ENCODE measurements at regions of chr5 and their contacts with region 1.

Region 1: GRCh38 chr5:93960044-93960443 is 218.6 kb upstream of the POU5F2 start:
- DNase-seq: no peak
- ATAC-seq: no peak
- H3K4me3 ChIP-seq: no peak overlapping the region
- H3K4me3 Mint-ChIP-seq: no peak overlapping the region
- H3K27ac ChIP-seq: no peak overlapping the region
- H3K27ac Mint-ChIP-seq: no peak overlapping the region
- H3K4me1 ChIP-seq: no peaks in the 10 kb centered on the region
- H3K4me1 Mint-ChIP-seq: peaks cover 0 to under 1% (median 0%) of the 10 kb centered on the region in 3 donors
- H3K27me3 ChIP-seq: no peaks in the 10 kb centered on the region
- H3K27me3 Mint-ChIP-seq: no peaks in the 10 kb centered on the region

Region 2: GRCh38 chr5:93995126-93995621 is 35.1 kb after region 1 on chr5:
- CTCF ChIA-PET with region 1: interaction called in 1 of 2 experiments, 10 read pairs
- POLR2A ChIA-PET with region 1: no interaction called
- DNase-seq: peak in 1 of 35 experiments; percentile 16
- ATAC-seq: peak in 2 of 4 experiments; percentile 43 to 46
- H3K4me3 ChIP-seq: no peak overlapping the region
- H3K4me3 Mint-ChIP-seq: no peak overlapping the region
- H3K27ac ChIP-seq: no peak overlapping the region
- H3K27ac Mint-ChIP-seq: no peak overlapping the region
- H3K4me1 ChIP-seq: no peaks in the 10 kb centered on the region
- H3K4me1 Mint-ChIP-seq: peaks cover 31 to 37% (median 32%) of the 10 kb centered on the region in 3 donors
- H3K27me3 ChIP-seq: no peaks in the 10 kb centered on the region
- H3K27me3 Mint-ChIP-seq: no peaks in the 10 kb centered on the region

Measured in T-cell (primary cell).